GM10248 (cell line): ENCODE measurements at regions of chr12 and their contacts with region 1.

Region 1: GRCh38 chr12:100229058-100229637 is 28.5 kb downstream of the ACTR6 start:
- DNase-seq: no peak
- CTCF ChIP-seq: peak; percentile 1

Region 2: DNA sequence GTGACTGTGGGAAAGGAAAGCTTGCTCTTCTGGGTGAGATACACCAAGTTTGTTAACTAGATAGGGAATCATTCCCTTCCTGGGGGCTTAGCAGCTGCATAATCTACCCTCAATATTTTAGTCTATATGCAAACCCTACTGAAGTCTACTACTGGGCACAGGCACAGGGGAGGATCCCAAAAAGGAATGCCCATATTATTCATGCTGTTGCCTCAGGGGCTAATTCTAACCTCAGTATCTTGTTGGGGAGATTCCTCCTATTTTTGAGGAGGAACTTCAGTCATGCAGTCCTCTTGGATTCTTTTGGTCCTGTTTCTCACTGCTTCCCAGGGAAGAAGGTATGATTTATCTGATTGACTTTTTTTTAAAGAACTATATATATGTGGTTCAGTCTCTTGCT is 185.5 kb before region 1 on chr12:
- CTCF ChIA-PET with region 1: no interaction called
- POLR2A ChIA-PET with region 1: no interaction called
- DNase-seq: no peak
- CTCF ChIP-seq: no peak

Region 3: DNA sequence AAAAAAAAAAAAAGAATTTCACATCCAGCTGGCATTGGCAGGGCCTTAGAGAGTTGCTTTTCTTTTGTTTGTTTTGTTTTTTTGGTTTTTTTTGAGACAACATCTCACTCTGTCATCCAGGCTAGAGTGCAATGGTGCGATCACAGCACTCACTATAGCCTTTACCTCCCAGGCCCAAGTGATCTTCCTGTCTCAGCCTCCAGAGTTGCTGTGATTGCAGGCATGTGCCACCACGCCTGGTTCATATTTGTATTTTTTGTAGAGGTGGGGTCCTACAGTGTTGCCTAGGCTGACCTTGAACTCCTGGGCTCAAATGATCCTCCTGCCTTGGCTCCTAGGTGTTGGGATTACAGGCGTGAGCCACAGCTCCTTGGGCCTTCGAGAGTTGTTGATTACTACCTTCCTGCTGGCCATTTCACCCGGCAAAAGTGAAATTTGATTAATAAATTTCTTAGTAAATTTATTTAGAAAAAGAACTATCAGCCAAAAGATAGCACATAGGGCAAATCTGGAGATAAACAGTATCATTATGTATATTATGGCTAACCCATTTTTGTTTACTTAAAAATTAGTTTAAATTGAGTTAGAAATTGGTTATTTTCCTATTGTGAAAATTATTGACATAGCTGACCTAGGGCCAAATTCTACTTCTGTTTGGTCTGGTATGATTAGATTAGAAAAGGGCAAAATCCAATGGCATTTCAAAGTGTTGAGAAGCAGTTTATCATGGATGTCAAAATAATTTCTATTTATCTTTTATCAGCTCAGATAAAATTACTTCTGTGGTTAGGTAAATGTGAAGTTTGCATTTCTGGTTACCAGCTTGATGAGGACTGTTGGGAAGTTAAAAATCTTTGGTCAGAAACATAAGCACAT is 15.9 kb before region 1 on chr12:
- CTCF ChIA-PET with region 1: interaction called, 10 read pairs
- POLR2A ChIA-PET with region 1: no interaction called
- DNase-seq: no peak
- CTCF ChIP-seq: no peak